Naive thymus-derived CD4-positive, alpha-beta T cell (primary cell): ENCODE measurements at regions of chr13 and their contacts with region 1.

Region 1: DNA sequence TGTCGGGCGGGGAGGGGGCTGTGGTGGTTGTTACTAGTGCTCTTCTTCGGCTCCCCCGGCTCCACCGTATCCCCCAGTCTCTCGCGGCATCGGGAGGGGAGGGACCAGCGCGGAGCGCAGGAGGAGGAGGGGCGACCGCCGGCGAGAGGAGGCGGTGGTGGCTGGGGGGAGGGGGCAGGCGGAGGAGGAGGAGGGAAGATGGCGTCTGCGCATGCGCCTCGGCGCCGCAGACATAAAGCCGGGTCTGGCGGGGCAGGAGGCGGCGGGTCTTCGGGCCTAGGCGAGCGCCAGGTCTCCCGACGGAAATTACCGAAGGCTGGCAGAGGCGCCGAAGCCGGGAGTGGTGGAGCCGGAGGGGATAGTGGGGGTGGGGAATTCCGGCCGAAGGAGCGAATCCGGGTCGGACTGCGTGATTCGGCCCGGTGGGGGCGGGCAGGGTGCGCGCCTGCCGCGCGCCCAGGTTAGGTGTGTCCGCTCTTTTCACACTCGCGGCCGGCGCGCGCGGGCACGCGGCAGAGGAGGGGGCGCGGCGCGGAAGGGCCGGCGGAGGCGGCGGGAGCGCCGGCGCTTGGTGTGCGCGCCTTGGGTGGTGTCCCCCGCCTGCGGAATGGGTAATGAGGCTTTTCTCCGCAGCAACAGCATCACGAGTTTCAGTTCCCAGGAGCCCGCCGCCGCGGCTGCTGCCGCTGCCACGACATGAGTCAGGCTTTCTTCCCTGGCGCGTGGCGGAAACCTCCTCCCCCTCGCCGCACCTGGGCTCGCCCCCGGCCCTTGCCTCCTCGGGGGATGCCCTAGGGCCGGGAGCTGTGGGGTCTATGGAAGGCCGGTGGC is 1.3 kb upstream of the TSC22D1 start:
- DNase-seq: peak; percentile 91 to 95 (median 94)
- ATAC-seq: peak; percentile 85
- H3K4me3 ChIP-seq: peak overlapping the region; percentile 66
- H3K4me3 Mint-ChIP-seq: peak overlapping the region; percentile 78 to 99 (median 93)
- H3K27ac ChIP-seq: peak overlapping the region; percentile 84
- H3K27ac Mint-ChIP-seq: peak overlapping the region; percentile 74 to 95 (median 93)
- H3K4me1 ChIP-seq: peaks cover 16 to 27% of the 10 kb centered on the region in 2 donors
- H3K4me1 Mint-ChIP-seq: peaks cover 31 to 40% (median 38%) of the 10 kb centered on the region in 7 donors
- H3K27me3 ChIP-seq: no peaks in the 10 kb centered on the region
- H3K27me3 Mint-ChIP-seq: peaks cover 0 to 56% (median 0%) of the 10 kb centered on the region in 5 donors

Region 2: GRCh38 chr13:43905435-43906031 is 671.9 kb before region 1 on chr13:
- CTCF ChIA-PET with region 1: no interaction called
- POLR2A ChIA-PET with region 1: no interaction called
- intact Hi-C with region 1: loop called in 1 of 2 experiments (anchors 10 kb)
- DNase-seq: peak in 7 of 9 donors; percentile 21 to 61 (median 48)
- ATAC-seq: peak; percentile 85
- H3K4me3 ChIP-seq: no peak overlapping the region
- H3K4me3 Mint-ChIP-seq: no peak overlapping the region
- H3K27ac ChIP-seq: no peak overlapping the region
- H3K27ac Mint-ChIP-seq: no peak overlapping the region
- H3K4me1 ChIP-seq: no peaks in the 10 kb centered on the region
- H3K4me1 Mint-ChIP-seq: peaks cover 0 to 6% (median 3%) of the 10 kb centered on the region in 7 donors
- H3K27me3 ChIP-seq: no peaks in the 10 kb centered on the region
- H3K27me3 Mint-ChIP-seq: peaks cover 13 to 35% (median 18%) of the 10 kb centered on the region in 5 donors

Region 3: DNA sequence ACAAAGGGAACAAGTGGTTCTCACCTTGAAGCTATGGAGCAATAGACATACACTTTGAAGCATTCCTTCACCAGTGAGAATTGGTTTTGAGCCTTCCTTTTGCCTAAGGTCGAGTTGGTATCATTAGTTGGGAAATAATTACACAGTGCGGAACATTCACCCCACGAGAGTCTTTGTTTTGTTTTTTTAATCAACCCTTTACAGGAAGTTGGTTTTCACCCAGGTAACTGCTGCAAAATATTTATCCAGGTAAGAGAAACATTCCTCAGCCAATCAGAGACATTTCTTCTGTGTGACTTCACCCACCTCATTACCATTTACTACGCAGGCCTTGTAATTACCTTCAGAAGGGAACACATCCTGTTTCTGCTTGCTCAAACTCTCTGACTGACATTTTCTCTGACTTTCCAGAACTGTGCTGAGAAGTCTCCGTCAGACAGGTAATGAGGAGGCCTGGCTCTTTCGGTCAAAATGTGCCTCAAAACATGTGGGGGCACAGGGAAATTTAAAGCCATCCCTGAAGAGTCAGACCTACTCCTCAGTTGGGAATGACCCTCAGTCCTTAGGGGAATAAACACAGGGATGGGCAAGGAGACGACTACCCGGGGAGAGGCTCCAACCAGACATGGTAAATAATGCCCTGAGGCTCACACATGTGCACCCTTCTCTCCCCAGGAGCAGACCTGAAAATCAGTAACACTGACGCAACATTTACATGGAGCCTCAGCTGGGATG is 226.5 kb before region 1 on chr13:
- CTCF ChIA-PET with region 1: no interaction called
- POLR2A ChIA-PET with region 1: no interaction called
- intact Hi-C with region 1: no loop called
- DNase-seq: peak in 6 of 9 donors; percentile 1 to 40 (median 27)
- ATAC-seq: no peak
- H3K4me3 ChIP-seq: no peak overlapping the region
- H3K4me3 Mint-ChIP-seq: peak overlapping the region in 1 of 10 donors; percentile 2
- H3K27ac ChIP-seq: no peak overlapping the region
- H3K27ac Mint-ChIP-seq: peak overlapping the region in 5 of 9 donors; percentile 49 to 86 (median 80)
- H3K4me1 ChIP-seq: peaks cover 0 to 5% of the 10 kb centered on the region in 2 donors
- H3K4me1 Mint-ChIP-seq: peaks cover 4 to 38% (median 20%) of the 10 kb centered on the region in 7 donors
- H3K27me3 ChIP-seq: no peaks in the 10 kb centered on the region
- H3K27me3 Mint-ChIP-seq: peaks cover 0 to 10% (median 3%) of the 10 kb centered on the region in 5 donors

Region 4: DNA sequence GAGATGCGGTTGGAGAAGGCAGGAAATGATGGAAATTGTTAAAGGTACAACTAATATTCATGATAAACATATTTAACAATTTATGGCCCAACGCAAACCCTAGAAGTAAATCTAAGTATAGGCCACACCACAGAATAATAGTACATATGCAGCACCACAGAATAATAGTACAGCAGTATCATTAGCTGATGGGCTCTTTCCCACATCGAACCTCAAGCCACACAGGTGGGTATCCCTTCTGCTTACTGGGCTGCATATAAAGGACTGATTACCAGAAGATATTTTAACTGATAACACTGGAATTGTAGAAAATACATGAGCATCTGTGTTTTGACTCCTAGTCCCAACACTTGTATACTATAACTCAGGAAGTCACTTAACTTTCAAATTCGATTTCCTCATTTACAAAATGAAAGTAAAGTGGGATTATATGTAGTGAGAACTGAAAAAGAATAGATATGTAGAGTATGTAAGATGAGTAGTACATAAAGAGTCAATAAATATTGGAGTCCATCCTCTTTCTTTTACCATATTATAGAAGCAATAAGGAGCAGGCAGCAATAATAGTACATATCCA is 92.8 kb before region 1 on chr13:
- CTCF ChIA-PET with region 1: interaction called, 3 read pairs
- POLR2A ChIA-PET with region 1: interaction called, 4 read pairs
- intact Hi-C with region 1: loop called (anchors 1 kb)
- DNase-seq: no peak
- ATAC-seq: no peak
- H3K4me3 ChIP-seq: peak overlapping the region; percentile 38
- H3K4me3 Mint-ChIP-seq: peak overlapping the region; percentile 13 to 77 (median 72)
- H3K27ac ChIP-seq: peak overlapping the region; percentile 22
- H3K27ac Mint-ChIP-seq: peak overlapping the region in 8 of 9 donors; percentile 1 to 73 (median 52)
- H3K4me1 ChIP-seq: peaks cover 7 to 16% of the 10 kb centered on the region in 2 donors
- H3K4me1 Mint-ChIP-seq: peaks cover 6 to 25% (median 14%) of the 10 kb centered on the region in 7 donors
- H3K27me3 ChIP-seq: no peaks in the 10 kb centered on the region
- H3K27me3 Mint-ChIP-seq: no peaks in the 10 kb centered on the region

Region 5: DNA sequence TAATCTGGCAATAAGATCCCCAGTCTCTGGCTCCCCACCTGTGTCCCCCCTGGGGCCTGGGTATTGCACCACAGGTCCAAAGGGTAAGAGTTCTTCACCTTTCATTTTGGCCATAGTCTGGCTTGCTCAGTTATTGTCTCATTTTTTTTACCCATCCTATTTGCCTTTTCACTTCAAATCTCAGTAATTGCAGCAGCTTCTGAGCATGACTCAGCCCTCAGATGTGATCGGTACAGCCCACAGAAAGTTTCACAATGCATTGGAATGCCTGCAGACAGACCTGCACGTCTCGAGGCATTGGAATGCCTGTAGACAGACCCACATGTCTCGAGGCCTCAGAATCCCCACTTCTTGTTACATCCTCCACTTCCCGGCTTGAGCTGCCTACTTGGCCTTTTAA is 238.2 kb after region 1 on chr13:
- CTCF ChIA-PET with region 1: no interaction called
- POLR2A ChIA-PET with region 1: no interaction called
- intact Hi-C with region 1: loop called in 1 of 2 experiments (anchors 5 kb)
- DNase-seq: peak in 1 of 9 donors; percentile 49
- ATAC-seq: no peak
- H3K4me3 ChIP-seq: no peak overlapping the region
- H3K4me3 Mint-ChIP-seq: no peak overlapping the region
- H3K27ac ChIP-seq: no peak overlapping the region
- H3K27ac Mint-ChIP-seq: no peak overlapping the region
- H3K4me1 ChIP-seq: no peaks in the 10 kb centered on the region
- H3K4me1 Mint-ChIP-seq: peaks cover 0 to 16% (median 0%) of the 10 kb centered on the region in 7 donors
- H3K27me3 ChIP-seq: no peaks in the 10 kb centered on the region
- H3K27me3 Mint-ChIP-seq: peaks cover 0 to 20% (median 4%) of the 10 kb centered on the region in 5 donors

Region 6: GRCh38 chr13:45297456-45298205 is 720.2 kb after region 1 on chr13:
- CTCF ChIA-PET with region 1: no interaction called
- POLR2A ChIA-PET with region 1: no interaction called
- intact Hi-C with region 1: loop called in 1 of 2 experiments (anchors 10 kb)
- DNase-seq: peak in 6 of 9 donors; percentile 5 to 55 (median 39)
- ATAC-seq: peak; percentile 69
- H3K4me3 ChIP-seq: no peak overlapping the region
- H3K4me3 Mint-ChIP-seq: peak overlapping the region; percentile 2 to 56 (median 30)
- H3K27ac ChIP-seq: peak overlapping the region; percentile 8
- H3K27ac Mint-ChIP-seq: peak overlapping the region; percentile 69 to 93 (median 83)
- H3K4me1 ChIP-seq: peaks cover 21 to 30% of the 10 kb centered on the region in 2 donors
- H3K4me1 Mint-ChIP-seq: peaks cover 30 to 54% (median 39%) of the 10 kb centered on the region in 7 donors
- H3K27me3 ChIP-seq: no peaks in the 10 kb centered on the region
- H3K27me3 Mint-ChIP-seq: peaks cover 0 to 1% (median 0%) of the 10 kb centered on the region in 5 donors

Region 7: GRCh38 chr13:46052319-46053161 is 1475.1 kb after region 1 on chr13 and contains the start of gene ZC3H13:
- CTCF ChIA-PET with region 1: no interaction called
- POLR2A ChIA-PET with region 1: no interaction called
- intact Hi-C with region 1: loop called in 1 of 2 experiments (anchors 5 kb)
- DNase-seq: peak; percentile 75 to 95 (median 92)
- ATAC-seq: peak; percentile 100
- H3K4me3 ChIP-seq: peak within 1 kb of the TSS; percentile 89
- H3K4me3 Mint-ChIP-seq: peak within 1 kb of the TSS; percentile 87 to 96 (median 94)
- H3K27ac ChIP-seq: peak within 1 kb of the TSS; percentile 98
- H3K27ac Mint-ChIP-seq: peak within 1 kb of the TSS; percentile 93 to 99 (median 97)
- H3K4me1 ChIP-seq: peaks cover 22 to 26% of the 10 kb centered on the region in 2 donors
- H3K4me1 Mint-ChIP-seq: peaks cover 19 to 63% (median 46%) of the 10 kb centered on the region in 7 donors
- H3K27me3 ChIP-seq: no peaks in the 10 kb centered on the region
- H3K27me3 Mint-ChIP-seq: peaks cover 5 to 32% (median 15%) of the 10 kb centered on the region in 5 donors
- total RNA-seq, gene ZC3H13: 41.1 to 67.0 (median 46.5) TPM